ENCODE measurements at regions of chr17 and their contacts with region 1.

Region 1: GRCh38 chr17:12983991-12984884 is 33.6 kb downstream of the ELAC2 start:
- DNase-seq: peak; percentile 28 to 37
- H3K4me3 ChIP-seq: no peak overlapping the region
- H3K27ac ChIP-seq: peak overlapping the region; percentile 28 to 55 (median 39)
- H3K4me1 ChIP-seq: peaks cover 0 to 39% of the 10 kb centered on the region in 2 donors
- H3K27me3 ChIP-seq: no peaks in the 10 kb centered on the region
- CTCF ChIP-seq: no peak
- POLR2A ChIP-seq: no peak

Region 2: GRCh38 chr17:12789777-12790609 is 194.2 kb before region 1 on chr17:
- intact Hi-C with region 1: loop called (anchors 10 kb)
- DNase-seq: peak; percentile 37 to 41
- H3K4me3 ChIP-seq: peak overlapping the region; percentile 55 to 80 (median 77)
- H3K27ac ChIP-seq: peak overlapping the region; percentile 41 to 78 (median 72)
- H3K4me1 ChIP-seq: peaks cover 0 to 6% of the 10 kb centered on the region in 2 donors
- H3K27me3 ChIP-seq: no peaks in the 10 kb centered on the region
- CTCF ChIP-seq: no peak
- POLR2A ChIP-seq: no peak